ENCODE measurements at regions of chr14 and their contacts with region 1.

Region 1: GRCh38 chr14:20489093-20489994 is 16.0 kb upstream of the RNASE10 start:
- DNase-seq: no peak
- H3K4me3 Mint-ChIP-seq: peak overlapping the region; percentile 1
- H3K27ac Mint-ChIP-seq: peak overlapping the region; percentile 65
- H3K4me1 Mint-ChIP-seq: peaks cover 63% of the 10 kb centered on the region
- H3K27me3 Mint-ChIP-seq: no peaks in the 10 kb centered on the region

Region 2: DNA sequence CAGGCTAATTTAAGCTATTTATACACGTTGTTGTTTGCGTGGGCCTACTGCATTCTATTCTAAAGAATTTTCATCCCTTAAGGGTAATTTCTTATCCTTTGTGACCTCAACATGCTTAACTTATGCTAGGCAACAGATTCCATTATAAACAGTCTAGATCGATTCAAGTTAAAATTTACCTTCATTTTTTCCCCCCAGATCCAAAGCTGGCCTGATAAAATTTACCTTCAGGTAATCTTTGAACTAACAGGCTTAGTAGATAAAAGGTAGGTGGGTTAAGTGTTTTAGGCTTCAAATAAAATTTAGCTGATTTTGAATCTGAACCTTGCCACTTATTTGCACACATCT is 155.9 kb before region 1 on chr14:
- CTCF ChIA-PET with region 1: no interaction called
- POLR2A ChIA-PET with region 1: no interaction called
- intact Hi-C with region 1: no loop called
- DNase-seq: no peak
- H3K4me3 Mint-ChIP-seq: peak overlapping the region; percentile 99
- H3K27ac Mint-ChIP-seq: peak overlapping the region; percentile 92
- H3K4me1 Mint-ChIP-seq: peaks cover 33% of the 10 kb centered on the region
- H3K27me3 Mint-ChIP-seq: no peaks in the 10 kb centered on the region

Region 3: GRCh38 chr14:20454516-20455354 is 34.6 kb before region 1 on chr14 and contains the starts of genes APEX1 and OSGEP:
- CTCF ChIA-PET with region 1: no interaction called
- POLR2A ChIA-PET with region 1: no interaction called
- intact Hi-C with region 1: loop called (anchors 2 kb)
- DNase-seq: peak; percentile 99
- H3K4me3 Mint-ChIP-seq: peak within 1 kb of the TSS; percentile 13
- H3K27ac Mint-ChIP-seq: no peak within 1 kb of the TSS
- H3K4me1 Mint-ChIP-seq: peaks cover 22% of the 10 kb centered on the region
- H3K27me3 Mint-ChIP-seq: no peaks in the 10 kb centered on the region
- total RNA-seq, gene APEX1: 186 to 193 TPM
- total RNA-seq, gene OSGEP: 39.2 to 41.0 TPM

Region 4: GRCh38 chr14:20461274-20462001 is 27.9 kb before region 1 on chr14 and contains the start of gene PIP4P1:
- CTCF ChIA-PET with region 1: no interaction called
- POLR2A ChIA-PET with region 1: no interaction called
- intact Hi-C with region 1: loop called (anchors 1 kb)
- DNase-seq: peak; percentile 99
- H3K4me3 Mint-ChIP-seq: peak within 1 kb of the TSS; percentile 91
- H3K27ac Mint-ChIP-seq: peak within 1 kb of the TSS; percentile 93
- H3K4me1 Mint-ChIP-seq: peaks cover 33% of the 10 kb centered on the region
- H3K27me3 Mint-ChIP-seq: no peaks in the 10 kb centered on the region
- total RNA-seq, gene PIP4P1: 31.1 to 35.2 TPM

Region 5: GRCh38 chr14:20782280-20782890 is 293.0 kb after region 1 on chr14:
- CTCF ChIA-PET with region 1: no interaction called
- POLR2A ChIA-PET with region 1: no interaction called
- intact Hi-C with region 1: loop called (anchors 5 kb)
- DNase-seq: peak; percentile 32
- H3K4me3 Mint-ChIP-seq: peak overlapping the region; percentile 64
- H3K27ac Mint-ChIP-seq: peak overlapping the region; percentile 79
- H3K4me1 Mint-ChIP-seq: peaks cover 29% of the 10 kb centered on the region
- H3K27me3 Mint-ChIP-seq: no peaks in the 10 kb centered on the region